ENCODE measurements at regions of chr1 and their contacts with region 1.

Region 1: GRCh38 chr1:185681034-185681633 is 53.1 kb upstream of the HMCN1 start:
- DNase-seq: peak; percentile 87
- H3K4me3 ChIP-seq: no peak overlapping the region
- H3K27ac ChIP-seq: peak overlapping the region; percentile 54
- H3K4me1 ChIP-seq: peaks cover 68% of the 10 kb centered on the region
- H3K27me3 ChIP-seq: no peaks in the 10 kb centered on the region
- CTCF ChIP-seq: peak; percentile 75

Region 2: DNA sequence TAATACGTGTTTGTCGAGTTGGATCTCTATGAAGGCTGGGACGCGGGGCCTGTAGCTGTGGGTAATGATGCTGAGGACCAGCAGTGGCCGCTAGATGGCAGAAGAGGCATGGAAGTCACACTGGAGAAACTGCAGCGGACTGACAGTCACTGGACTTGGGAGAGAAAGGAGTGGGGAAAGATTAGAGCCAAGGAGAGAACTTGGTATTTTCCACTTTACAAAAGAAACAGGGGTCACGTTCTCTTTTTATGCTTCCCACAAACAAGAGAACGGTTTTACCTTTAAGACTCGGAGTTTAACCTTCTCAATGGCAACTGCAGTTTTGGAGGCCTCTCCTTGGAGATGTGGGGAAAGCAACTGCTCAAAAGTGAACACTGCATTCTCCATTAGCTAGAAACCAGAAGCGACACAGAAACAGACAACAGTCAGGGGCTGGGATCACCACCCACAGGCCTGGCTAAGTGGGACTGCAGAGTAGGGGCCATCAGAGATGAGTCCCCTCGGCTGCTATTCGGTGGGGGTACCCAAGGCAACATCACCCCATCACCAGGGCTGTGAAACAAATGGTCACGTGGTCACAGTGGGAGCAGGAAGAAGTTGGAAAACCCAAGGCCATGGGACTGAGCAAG is 875.4 kb before region 1 on chr1:
- CTCF ChIA-PET with region 1: no interaction called
- POLR2A ChIA-PET with region 1: no interaction called
- intact Hi-C with region 1: loop called (anchors 5 kb)
- DNase-seq: peak; percentile 88
- H3K4me3 ChIP-seq: no peak overlapping the region
- H3K27ac ChIP-seq: no peak overlapping the region
- H3K4me1 ChIP-seq: no peaks in the 10 kb centered on the region
- H3K27me3 ChIP-seq: no peaks in the 10 kb centered on the region
- CTCF ChIP-seq: peak; percentile 95

Region 3: DNA sequence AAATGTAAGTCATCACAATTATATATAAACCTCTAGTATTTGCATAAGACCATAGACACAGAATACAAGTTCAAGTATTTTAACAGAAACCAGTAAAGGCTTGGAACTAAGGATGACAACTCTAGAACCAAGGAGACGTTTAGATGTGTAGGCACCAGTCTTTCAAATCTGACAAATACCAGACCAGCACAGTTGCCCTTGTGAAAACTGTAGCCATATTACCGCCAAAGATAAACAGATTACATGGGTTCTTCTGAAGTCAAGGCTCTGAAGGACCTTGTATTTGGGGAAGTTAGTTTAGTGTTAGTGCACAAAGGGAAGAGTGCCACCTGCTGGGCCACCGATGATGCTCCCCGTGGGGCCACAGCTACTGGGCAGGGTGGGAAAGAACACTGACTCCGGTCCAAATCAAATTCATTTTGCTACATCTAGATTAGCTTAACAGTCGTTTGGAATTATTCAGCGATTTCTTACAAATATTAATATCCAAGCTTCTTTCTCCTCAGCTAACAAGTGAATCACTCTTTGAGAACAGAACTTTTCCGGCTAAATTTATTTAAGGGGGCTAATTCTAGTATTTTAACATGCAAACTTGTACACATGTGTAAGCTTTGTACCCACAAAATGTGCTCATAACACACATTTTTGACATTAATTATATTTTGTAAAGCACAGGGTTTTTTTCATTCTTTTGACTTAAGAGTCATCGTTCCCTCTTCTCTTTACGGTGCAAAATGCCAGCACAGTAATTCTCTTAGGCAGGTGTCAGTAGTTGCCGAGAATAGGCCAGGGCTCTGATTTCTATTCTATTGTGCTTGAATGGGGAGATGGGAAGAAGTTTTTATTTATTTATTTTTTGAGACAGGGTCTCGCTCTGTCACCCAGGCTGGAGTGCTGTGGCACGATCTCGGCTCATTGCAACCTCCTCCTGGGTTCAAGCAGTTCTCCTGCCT is 698.9 kb before region 1 on chr1:
- CTCF ChIA-PET with region 1: no interaction called
- POLR2A ChIA-PET with region 1: no interaction called
- intact Hi-C with region 1: loop called (anchors 10 kb)
- DNase-seq: peak; percentile 83
- H3K4me3 ChIP-seq: no peak overlapping the region
- H3K27ac ChIP-seq: no peak overlapping the region
- H3K4me1 ChIP-seq: no peaks in the 10 kb centered on the region
- H3K27me3 ChIP-seq: no peaks in the 10 kb centered on the region
- CTCF ChIP-seq: peak; percentile 93

Region 4: DNA sequence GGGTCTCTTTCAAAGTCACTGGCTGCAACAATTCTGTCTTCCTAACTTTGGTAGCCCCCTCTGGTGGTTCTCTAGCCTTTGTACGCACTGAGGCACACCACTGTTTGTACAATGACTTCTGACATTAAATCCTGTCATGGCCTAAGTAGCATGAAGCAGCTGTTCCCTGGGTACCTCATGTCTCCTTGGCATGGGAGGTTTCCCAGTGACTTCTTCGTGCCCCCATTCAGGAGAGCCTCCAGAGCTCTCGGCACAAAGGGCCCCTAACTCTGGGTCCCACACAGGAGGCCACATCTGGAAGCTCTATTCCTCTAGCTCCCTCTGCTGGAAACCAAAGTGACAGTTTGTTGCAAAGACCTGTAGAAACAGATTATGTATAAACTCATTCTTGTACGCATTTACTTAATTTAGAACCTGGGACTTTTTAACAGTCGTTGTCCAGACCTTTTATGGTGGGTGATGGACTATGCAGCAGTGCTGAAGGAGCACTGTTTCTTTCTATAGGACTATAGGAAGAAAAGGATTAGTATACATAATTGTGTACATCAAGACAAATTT is 510.8 kb before region 1 on chr1:
- CTCF ChIA-PET with region 1: interaction called, 6 read pairs
- POLR2A ChIA-PET with region 1: interaction called, 3 read pairs
- intact Hi-C with region 1: loop called (anchors 5 kb)
- DNase-seq: peak; percentile 88
- H3K4me3 ChIP-seq: peak overlapping the region; percentile 7
- H3K27ac ChIP-seq: no peak overlapping the region
- H3K4me1 ChIP-seq: no peaks in the 10 kb centered on the region
- H3K27me3 ChIP-seq: no peaks in the 10 kb centered on the region
- CTCF ChIP-seq: peak; percentile 98

Region 5: GRCh38 chr1:185670187-185670627 is 10.9 kb before region 1 on chr1:
- CTCF ChIA-PET with region 1: interaction called, 13 read pairs
- POLR2A ChIA-PET with region 1: no interaction called
- intact Hi-C with region 1: no loop called
- DNase-seq: peak; percentile 84
- H3K4me3 ChIP-seq: no peak overlapping the region
- H3K27ac ChIP-seq: peak overlapping the region; percentile 1
- H3K4me1 ChIP-seq: peaks cover 55% of the 10 kb centered on the region
- H3K27me3 ChIP-seq: no peaks in the 10 kb centered on the region
- CTCF ChIP-seq: peak; percentile 78